ENCODE measurements at regions of chr2 and their contacts with region 1.

Region 1: DNA sequence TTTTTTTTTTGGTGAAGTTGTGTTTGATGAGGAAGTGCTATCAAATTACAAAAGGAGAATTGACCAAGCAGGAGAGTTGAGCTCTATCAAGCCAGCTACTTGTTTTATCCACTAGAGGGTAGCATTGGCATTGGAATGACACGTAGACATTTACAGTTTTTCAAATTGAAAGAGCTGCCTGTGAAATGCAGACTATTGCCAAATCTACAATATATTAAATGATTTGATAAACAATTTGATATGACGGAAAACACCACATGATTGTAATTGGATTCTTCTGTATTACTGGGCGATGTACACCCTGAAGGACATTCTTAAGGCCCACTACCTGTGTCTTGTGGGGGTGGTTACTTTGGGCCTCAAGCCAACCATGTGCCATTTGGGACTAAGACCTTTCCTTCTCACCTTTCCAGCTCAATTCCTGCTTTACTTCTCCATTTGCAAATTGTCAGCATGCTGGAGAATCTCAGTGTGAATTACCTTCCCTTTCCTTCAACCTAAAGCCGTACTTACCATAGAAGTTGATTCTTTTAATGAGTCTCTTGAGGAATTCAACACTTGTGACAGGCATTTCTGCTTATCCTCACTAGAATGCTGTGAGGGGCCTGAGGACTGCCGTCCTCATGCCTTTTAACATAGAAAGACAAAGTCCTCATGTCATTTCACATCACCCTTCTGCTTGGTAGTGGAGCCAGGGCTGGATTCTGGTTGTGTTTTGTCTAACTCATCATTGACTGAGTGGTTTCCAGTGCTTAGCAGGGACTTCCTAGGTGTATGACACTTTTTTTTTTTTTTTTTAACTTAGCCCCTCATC is 134.8 kb upstream of the THUMPD2 start:
- DNase-seq: peak; percentile 28
- H3K4me3 Mint-ChIP-seq: no peak overlapping the region
- H3K27ac Mint-ChIP-seq: no peak overlapping the region
- H3K4me1 Mint-ChIP-seq: no peaks in the 10 kb centered on the region
- H3K27me3 Mint-ChIP-seq: peaks cover 21% of the 10 kb centered on the region
- CTCF ChIP-seq: peak; percentile 47

Region 2: DNA sequence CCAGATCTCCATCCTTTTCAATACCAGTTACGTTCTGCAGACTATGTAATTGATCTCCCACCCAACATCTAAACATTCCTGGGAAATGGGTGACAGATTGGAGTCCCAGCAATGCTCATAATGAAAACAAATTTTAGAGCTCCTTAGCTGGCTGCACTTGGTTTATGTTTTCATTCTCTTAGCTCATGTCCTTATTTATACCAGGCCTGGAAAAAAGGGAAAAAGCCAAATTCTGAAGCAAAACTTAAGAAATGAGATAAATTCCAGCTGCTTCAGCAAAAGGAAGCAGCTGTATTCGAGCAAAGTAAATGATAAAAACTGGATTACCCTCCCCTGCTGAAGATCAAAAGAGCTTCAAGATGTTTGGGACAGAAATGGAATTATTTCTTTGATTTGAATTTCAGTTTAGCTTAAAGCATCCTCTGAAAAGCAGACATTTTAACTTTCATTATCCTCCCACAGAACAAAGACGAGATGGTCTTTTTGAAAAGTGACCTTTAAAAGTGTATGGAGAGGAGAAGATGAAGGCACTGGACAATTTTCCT is 61.7 kb after region 1 on chr2:
- CTCF ChIA-PET with region 1: no interaction called
- intact Hi-C with region 1: no loop called
- DNase-seq: no peak
- H3K4me3 Mint-ChIP-seq: no peak overlapping the region
- H3K27ac Mint-ChIP-seq: no peak overlapping the region
- H3K4me1 Mint-ChIP-seq: no peaks in the 10 kb centered on the region
- H3K27me3 Mint-ChIP-seq: no peaks in the 10 kb centered on the region
- CTCF ChIP-seq: no peak

Region 3: DNA sequence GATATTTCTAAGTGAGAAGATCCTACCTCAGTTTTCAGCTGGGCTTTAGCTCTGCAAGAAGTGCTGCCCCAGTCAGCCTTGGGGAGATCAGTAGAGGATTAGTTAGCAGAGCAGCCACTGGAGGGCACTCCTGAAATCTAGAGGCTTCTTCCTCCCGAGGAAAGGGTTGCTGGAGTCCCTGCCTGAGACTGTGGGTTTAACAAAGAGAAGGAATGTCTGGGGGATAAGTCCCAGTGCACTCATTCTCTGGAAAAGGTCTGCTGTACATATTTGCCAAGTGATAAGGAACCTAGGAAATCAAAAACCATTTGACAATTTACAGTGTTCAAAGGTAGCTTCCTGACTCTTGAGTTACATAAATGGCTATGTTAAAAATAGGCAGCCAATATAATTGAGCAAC is 330.8 kb after region 1 on chr2:
- CTCF ChIA-PET with region 1: interaction called, 14 read pairs
- intact Hi-C with region 1: loop called (anchors 2 kb)
- DNase-seq: peak; percentile 59
- H3K4me3 Mint-ChIP-seq: no peak overlapping the region
- H3K27ac Mint-ChIP-seq: no peak overlapping the region
- H3K4me1 Mint-ChIP-seq: no peaks in the 10 kb centered on the region
- H3K27me3 Mint-ChIP-seq: no peaks in the 10 kb centered on the region
- CTCF ChIP-seq: peak; percentile 24

Region 4: GRCh38 chr2:40760071-40760666 is 846.3 kb after region 1 on chr2:
- CTCF ChIA-PET with region 1: interaction called, 5 read pairs
- intact Hi-C with region 1: loop called (anchors 1 kb)
- DNase-seq: peak; percentile 51
- H3K4me3 Mint-ChIP-seq: no peak overlapping the region
- H3K27ac Mint-ChIP-seq: no peak overlapping the region
- H3K4me1 Mint-ChIP-seq: no peaks in the 10 kb centered on the region
- H3K27me3 Mint-ChIP-seq: no peaks in the 10 kb centered on the region
- CTCF ChIP-seq: peak; percentile 70

Region 5: GRCh38 chr2:41698678-41699422 is 1785.0 kb after region 1 on chr2:
- CTCF ChIA-PET with region 1: interaction called, 7 read pairs
- intact Hi-C with region 1: loop called (anchors 10 kb)
- DNase-seq: peak; percentile 39
- H3K4me3 Mint-ChIP-seq: no peak overlapping the region
- H3K27ac Mint-ChIP-seq: no peak overlapping the region
- H3K4me1 Mint-ChIP-seq: no peaks in the 10 kb centered on the region
- H3K27me3 Mint-ChIP-seq: peaks cover 21% of the 10 kb centered on the region
- CTCF ChIP-seq: peak; percentile 69